ENCODE measurements at regions of chr1 and their contacts with region 1.

Region 1: DNA sequence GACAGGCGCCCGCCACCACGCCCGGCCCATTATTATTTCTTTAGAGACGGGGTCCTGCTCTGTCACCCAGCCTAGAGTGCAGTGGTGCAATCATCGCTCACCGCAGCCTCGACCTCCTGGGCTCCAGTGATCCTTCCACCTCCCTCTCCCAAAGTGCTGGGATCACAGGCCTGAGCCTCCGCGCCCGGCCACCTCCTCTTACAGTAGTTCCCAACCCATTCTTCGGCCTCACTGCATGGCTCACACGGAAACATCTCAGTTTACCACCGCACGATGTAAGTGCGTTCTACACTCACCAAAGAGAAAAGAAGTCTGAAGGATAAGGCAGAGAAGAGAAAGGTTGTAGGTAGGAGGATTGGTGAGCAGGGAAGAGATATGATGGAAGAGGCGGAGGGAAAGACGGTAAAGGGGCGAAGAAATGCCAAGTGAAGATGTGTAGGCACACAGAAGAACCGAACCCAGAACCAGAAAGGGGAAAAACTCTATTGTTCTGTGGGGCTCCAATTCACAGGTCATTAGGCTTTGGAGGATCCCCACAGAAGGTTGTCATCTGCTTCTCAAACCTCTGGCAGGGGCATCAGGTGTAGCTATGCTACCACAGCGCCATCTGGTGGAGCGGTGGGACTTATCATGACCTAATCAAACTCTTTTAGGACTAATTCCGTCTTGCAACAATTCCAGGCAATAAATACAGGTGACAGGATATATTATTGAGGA is 504.2 kb downstream of the SMYD3 start:
- DNase-seq: peak; percentile 68 to 90 (median 81)
- ATAC-seq: peak; percentile 51
- H3K4me3 ChIP-seq: no peak overlapping the region
- H3K4me3 Mint-ChIP-seq: no peak overlapping the region
- H3K27ac ChIP-seq: no peak overlapping the region
- H3K27ac Mint-ChIP-seq: no peak overlapping the region
- H3K4me1 ChIP-seq: no peaks in the 10 kb centered on the region
- H3K4me1 Mint-ChIP-seq: no peaks in the 10 kb centered on the region
- H3K27me3 ChIP-seq: no peaks in the 10 kb centered on the region
- H3K27me3 Mint-ChIP-seq: no peaks in the 10 kb centered on the region
- CTCF ChIP-seq: peak; percentile 87

Region 2: GRCh38 chr1:244599937-244600350 is 1402.9 kb before region 1 on chr1:
- CTCF ChIA-PET with region 1: no interaction called
- POLR2A ChIA-PET with region 1: no interaction called
- intact Hi-C with region 1: loop called in 1 of 2 experiments (anchors 10 kb)
- DNase-seq: peak in 5 of 9 experiments; percentile 6 to 38 (median 24)
- ATAC-seq: peak; percentile 87
- H3K4me3 ChIP-seq: no peak overlapping the region
- H3K4me3 Mint-ChIP-seq: no peak overlapping the region
- H3K27ac ChIP-seq: no peak overlapping the region
- H3K27ac Mint-ChIP-seq: no peak overlapping the region
- H3K4me1 ChIP-seq: no peaks in the 10 kb centered on the region
- H3K4me1 Mint-ChIP-seq: no peaks in the 10 kb centered on the region
- H3K27me3 ChIP-seq: no peaks in the 10 kb centered on the region
- H3K27me3 Mint-ChIP-seq: no peaks in the 10 kb centered on the region
- CTCF ChIP-seq: no peak

Region 3: DNA sequence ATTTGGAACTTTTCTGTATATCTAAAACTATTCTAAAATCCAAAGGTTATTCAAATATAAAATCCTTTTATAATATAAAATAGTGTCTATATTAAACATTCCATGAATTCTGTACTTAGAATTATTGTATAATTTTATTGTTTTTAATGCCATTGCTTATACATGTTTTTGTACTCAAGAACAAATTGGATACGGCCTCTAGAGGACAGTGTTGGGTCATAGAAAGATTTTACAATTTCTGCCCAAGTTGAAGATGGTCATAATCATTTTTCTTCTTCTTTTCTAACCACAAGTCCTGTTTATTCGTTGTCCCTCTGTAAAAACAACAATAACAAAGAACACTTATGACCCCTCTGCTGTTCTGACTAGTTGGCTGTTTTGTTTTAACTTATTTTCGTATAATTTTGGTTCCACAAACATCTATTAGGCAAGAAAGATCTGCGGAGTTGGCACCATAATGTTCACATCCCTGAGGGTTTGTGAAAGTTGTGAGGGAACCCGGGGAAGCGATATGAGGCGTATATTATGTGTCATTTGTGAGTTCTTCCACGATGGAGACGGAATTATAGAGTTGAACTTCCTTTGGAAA is 923.8 kb before region 1 on chr1:
- CTCF ChIA-PET with region 1: no interaction called
- POLR2A ChIA-PET with region 1: no interaction called
- intact Hi-C with region 1: loop called in 1 of 2 experiments (anchors 10 kb)
- DNase-seq: peak in 1 of 9 experiments; percentile 10
- ATAC-seq: no peak
- H3K4me3 ChIP-seq: no peak overlapping the region
- H3K4me3 Mint-ChIP-seq: no peak overlapping the region
- H3K27ac ChIP-seq: no peak overlapping the region
- H3K27ac Mint-ChIP-seq: no peak overlapping the region
- H3K4me1 ChIP-seq: no peaks in the 10 kb centered on the region
- H3K4me1 Mint-ChIP-seq: no peaks in the 10 kb centered on the region
- H3K27me3 ChIP-seq: no peaks in the 10 kb centered on the region
- H3K27me3 Mint-ChIP-seq: no peaks in the 10 kb centered on the region
- CTCF ChIP-seq: peak; percentile 45

Region 4: GRCh38 chr1:245888809-245889208 is 114.1 kb before region 1 on chr1:
- CTCF ChIA-PET with region 1: interaction called, 19 read pairs
- POLR2A ChIA-PET with region 1: no interaction called
- intact Hi-C with region 1: loop called (anchors 1 kb)
- DNase-seq: peak in 2 of 9 experiments; percentile 41 to 56
- ATAC-seq: no peak
- H3K4me3 ChIP-seq: no peak overlapping the region
- H3K4me3 Mint-ChIP-seq: no peak overlapping the region
- H3K27ac ChIP-seq: no peak overlapping the region
- H3K27ac Mint-ChIP-seq: no peak overlapping the region
- H3K4me1 ChIP-seq: no peaks in the 10 kb centered on the region
- H3K4me1 Mint-ChIP-seq: no peaks in the 10 kb centered on the region
- H3K27me3 ChIP-seq: no peaks in the 10 kb centered on the region
- H3K27me3 Mint-ChIP-seq: no peaks in the 10 kb centered on the region
- CTCF ChIP-seq: no peak